ENCODE measurements at regions of chr2 and their contacts with region 1.

Region 1: GRCh38 chr2:32168513-32168912 is 2.8 kb downstream of the SLC30A6 start:
- DNase-seq: no peak
- ATAC-seq: no peak
- H3K4me3 Mint-ChIP-seq: no peak overlapping the region
- H3K27ac Mint-ChIP-seq: no peak overlapping the region
- H3K4me1 Mint-ChIP-seq: peaks cover 39% of the 10 kb centered on the region
- H3K27me3 Mint-ChIP-seq: no peaks in the 10 kb centered on the region
- CTCF ChIP-seq: no peak

Region 2: GRCh38 chr2:32010670-32011484 is 157.6 kb before region 1 on chr2 and contains the start of gene MEMO1:
- CTCF ChIA-PET with region 1: no interaction called
- POLR2A ChIA-PET with region 1: interaction called, 4 read pairs
- intact Hi-C with region 1: loop called (anchors 1 kb)
- DNase-seq: peak; percentile 93
- ATAC-seq: peak; percentile 81
- H3K4me3 Mint-ChIP-seq: peak within 1 kb of the TSS; percentile 91
- H3K27ac Mint-ChIP-seq: peak within 1 kb of the TSS; percentile 96
- H3K4me1 Mint-ChIP-seq: peaks cover 39% of the 10 kb centered on the region
- H3K27me3 Mint-ChIP-seq: no peaks in the 10 kb centered on the region
- CTCF ChIP-seq: no peak
- total RNA-seq, gene MEMO1: 68.7 and 71.6 TPM in 2 replicates

Region 3: GRCh38 chr2:32063310-32064161 is 105.0 kb before region 1 on chr2 and contains the start of gene SPAST:
- CTCF ChIA-PET with region 1: no interaction called
- POLR2A ChIA-PET with region 1: interaction called, 19 read pairs
- intact Hi-C with region 1: loop called (anchors 1 kb)
- DNase-seq: peak; percentile 96
- ATAC-seq: peak; percentile 93
- H3K4me3 Mint-ChIP-seq: peak within 1 kb of the TSS; percentile 97
- H3K27ac Mint-ChIP-seq: peak within 1 kb of the TSS; percentile 93
- H3K4me1 Mint-ChIP-seq: peaks cover 30% of the 10 kb centered on the region
- H3K27me3 Mint-ChIP-seq: no peaks in the 10 kb centered on the region
- CTCF ChIP-seq: no peak
- total RNA-seq, gene SPAST: 17.6 and 20.8 TPM in 2 replicates

Region 4: GRCh38 chr2:32277674-32278482 is 109.4 kb after region 1 on chr2 and contains the start of gene YIPF4:
- CTCF ChIA-PET with region 1: no interaction called
- POLR2A ChIA-PET with region 1: interaction called, 3 read pairs
- intact Hi-C with region 1: loop called (anchors 1 kb)
- DNase-seq: peak; percentile 92
- ATAC-seq: peak; percentile 98
- H3K4me3 Mint-ChIP-seq: peak within 1 kb of the TSS; percentile 90
- H3K27ac Mint-ChIP-seq: peak within 1 kb of the TSS; percentile 94
- H3K4me1 Mint-ChIP-seq: peaks cover 23% of the 10 kb centered on the region
- H3K27me3 Mint-ChIP-seq: peaks cover 9% of the 10 kb centered on the region
- CTCF ChIP-seq: no peak
- total RNA-seq, gene YIPF4: 25.6 and 27.2 TPM in 2 replicates

Region 5: GRCh38 chr2:32627814-32628579 is 459.5 kb after region 1 on chr2 and contains the start of gene TTC27:
- CTCF ChIA-PET with region 1: no interaction called
- POLR2A ChIA-PET with region 1: no interaction called
- intact Hi-C with region 1: loop called (anchors 5 kb)
- DNase-seq: peak; percentile 93
- ATAC-seq: peak; percentile 100
- H3K4me3 Mint-ChIP-seq: peak within 1 kb of the TSS; percentile 97
- H3K27ac Mint-ChIP-seq: peak within 1 kb of the TSS; percentile 93
- H3K4me1 Mint-ChIP-seq: peaks cover 27% of the 10 kb centered on the region
- H3K27me3 Mint-ChIP-seq: no peaks in the 10 kb centered on the region
- CTCF ChIP-seq: no peak
- total RNA-seq, gene TTC27: 34.8 and 36.3 TPM in 2 replicates